Naive thymus-derived CD4-positive, alpha-beta T cell (primary cell): ENCODE measurements at regions of chr3 and their contacts with region 1.

Region 1: DNA sequence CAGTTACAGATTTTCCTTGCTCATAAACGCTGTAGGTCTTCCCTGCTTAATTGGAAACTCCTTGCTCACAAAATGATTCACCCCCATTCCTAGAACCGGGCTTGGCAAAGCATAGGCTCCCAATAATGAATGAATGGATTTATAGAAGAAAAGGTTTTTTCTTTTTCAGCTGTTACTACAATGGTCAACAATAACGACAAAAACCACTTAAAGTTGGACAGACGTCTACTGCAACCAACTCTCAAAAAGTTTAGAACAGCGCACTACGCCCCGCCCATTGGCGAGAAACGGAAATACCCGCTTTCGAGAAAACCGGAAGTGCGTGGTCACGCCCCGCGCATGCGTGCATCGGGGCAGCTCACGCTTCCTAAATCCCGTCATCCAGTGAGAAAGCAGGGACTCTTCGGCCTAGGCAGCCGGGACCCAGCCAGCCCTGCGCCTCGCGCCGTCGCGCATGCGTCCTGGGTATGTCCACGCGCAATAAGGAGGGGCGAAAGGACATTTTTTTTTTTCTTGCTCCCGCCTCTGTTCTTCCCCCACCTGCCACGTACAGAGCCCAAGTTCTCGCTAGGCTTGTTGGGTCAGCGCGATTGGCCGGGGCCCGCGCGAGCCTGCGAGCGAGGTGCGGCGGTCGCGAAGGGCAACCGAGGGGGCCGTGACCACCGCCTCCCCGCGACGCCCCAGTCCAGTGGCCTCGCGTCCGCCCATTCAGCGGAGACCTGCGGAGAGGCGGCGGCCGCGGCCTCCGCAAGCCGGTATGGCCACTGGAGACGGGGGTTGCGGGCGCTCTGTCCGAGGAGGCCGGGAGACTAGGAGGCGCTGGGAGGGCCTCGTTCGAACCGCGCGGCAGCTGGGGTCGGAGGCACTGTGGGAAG is at the start of gene TFG:
- DNase-seq: peak; percentile 94 to 98 (median 96)
- ATAC-seq: peak; percentile 95
- H3K4me3 ChIP-seq: peak within 1 kb of the TSS; percentile 68
- H3K4me3 Mint-ChIP-seq: peak within 1 kb of the TSS; percentile 85 to 98 (median 94)
- H3K27ac ChIP-seq: peak within 1 kb of the TSS; percentile 90
- H3K27ac Mint-ChIP-seq: peak within 1 kb of the TSS; percentile 95 to 99 (median 98)
- H3K4me1 ChIP-seq: peaks cover 19 to 21% of the 10 kb centered on the region in 2 donors
- H3K4me1 Mint-ChIP-seq: peaks cover 32 to 50% (median 47%) of the 10 kb centered on the region in 7 donors
- H3K27me3 ChIP-seq: no peaks in the 10 kb centered on the region
- H3K27me3 Mint-ChIP-seq: peaks cover 0 to 14% (median 6%) of the 10 kb centered on the region in 5 donors
- total RNA-seq, gene TFG: 40.8 to 72.2 (median 45.6) TPM

Region 2: GRCh38 chr3:100260685-100261484 is 448.3 kb before region 1 on chr3 and contains the start of gene TBC1D23:
- CTCF ChIA-PET with region 1: no interaction called
- POLR2A ChIA-PET with region 1: interaction called, 3 read pairs
- intact Hi-C with region 1: loop called (anchors 1 kb)
- DNase-seq: peak; percentile 89 to 98 (median 96)
- ATAC-seq: peak; percentile 99
- H3K4me3 ChIP-seq: peak within 1 kb of the TSS; percentile 92
- H3K4me3 Mint-ChIP-seq: peak within 1 kb of the TSS; percentile 90 to 100 (median 94)
- H3K27ac ChIP-seq: peak within 1 kb of the TSS; percentile 89
- H3K27ac Mint-ChIP-seq: peak within 1 kb of the TSS; percentile 97 to 100 (median 99)
- H3K4me1 ChIP-seq: peaks cover 10 to 20% of the 10 kb centered on the region in 2 donors
- H3K4me1 Mint-ChIP-seq: peaks cover 37 to 75% (median 65%) of the 10 kb centered on the region in 7 donors
- H3K27me3 ChIP-seq: no peaks in the 10 kb centered on the region
- H3K27me3 Mint-ChIP-seq: no peaks in the 10 kb centered on the region
- total RNA-seq, gene TBC1D23: 30.8 to 42.4 (median 33.9) TPM

Region 3: DNA sequence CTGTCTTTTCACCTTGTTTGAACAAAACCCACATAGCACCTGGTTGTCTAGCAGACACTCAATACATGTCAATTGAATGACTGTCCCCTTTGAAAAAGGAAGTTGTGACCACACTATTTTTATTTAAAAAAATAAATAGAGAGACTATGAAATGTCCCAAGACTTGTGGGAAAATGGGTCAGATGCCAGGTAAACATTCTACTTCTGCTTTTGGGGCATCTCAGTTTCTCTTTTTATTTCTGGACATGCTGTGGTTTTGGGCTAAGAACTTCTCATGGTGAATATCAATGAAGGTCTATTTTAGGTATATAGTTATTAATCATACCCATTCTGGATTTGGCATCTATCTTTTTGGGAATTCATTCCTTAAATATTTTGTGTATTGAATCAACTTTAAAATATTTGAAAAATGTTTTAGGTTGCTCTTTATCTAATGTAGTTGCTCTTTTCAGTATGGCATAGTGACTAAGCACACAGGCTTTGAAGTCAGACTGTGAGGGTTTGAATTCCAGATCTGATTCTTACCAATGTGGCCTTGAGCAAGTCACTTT is 212.4 kb before region 1 on chr3:
- CTCF ChIA-PET with region 1: no interaction called
- POLR2A ChIA-PET with region 1: no interaction called
- intact Hi-C with region 1: no loop called
- DNase-seq: no peak
- ATAC-seq: no peak
- H3K4me3 ChIP-seq: no peak overlapping the region
- H3K4me3 Mint-ChIP-seq: no peak overlapping the region
- H3K27ac ChIP-seq: no peak overlapping the region
- H3K27ac Mint-ChIP-seq: no peak overlapping the region
- H3K4me1 ChIP-seq: peaks cover 6% of the 10 kb centered on the region in 2 donors
- H3K4me1 Mint-ChIP-seq: peaks cover 5 to 11% (median 9%) of the 10 kb centered on the region in 7 donors
- H3K27me3 ChIP-seq: no peaks in the 10 kb centered on the region
- H3K27me3 Mint-ChIP-seq: peaks cover 9 to 46% (median 24%) of the 10 kb centered on the region in 5 donors

Region 4: DNA sequence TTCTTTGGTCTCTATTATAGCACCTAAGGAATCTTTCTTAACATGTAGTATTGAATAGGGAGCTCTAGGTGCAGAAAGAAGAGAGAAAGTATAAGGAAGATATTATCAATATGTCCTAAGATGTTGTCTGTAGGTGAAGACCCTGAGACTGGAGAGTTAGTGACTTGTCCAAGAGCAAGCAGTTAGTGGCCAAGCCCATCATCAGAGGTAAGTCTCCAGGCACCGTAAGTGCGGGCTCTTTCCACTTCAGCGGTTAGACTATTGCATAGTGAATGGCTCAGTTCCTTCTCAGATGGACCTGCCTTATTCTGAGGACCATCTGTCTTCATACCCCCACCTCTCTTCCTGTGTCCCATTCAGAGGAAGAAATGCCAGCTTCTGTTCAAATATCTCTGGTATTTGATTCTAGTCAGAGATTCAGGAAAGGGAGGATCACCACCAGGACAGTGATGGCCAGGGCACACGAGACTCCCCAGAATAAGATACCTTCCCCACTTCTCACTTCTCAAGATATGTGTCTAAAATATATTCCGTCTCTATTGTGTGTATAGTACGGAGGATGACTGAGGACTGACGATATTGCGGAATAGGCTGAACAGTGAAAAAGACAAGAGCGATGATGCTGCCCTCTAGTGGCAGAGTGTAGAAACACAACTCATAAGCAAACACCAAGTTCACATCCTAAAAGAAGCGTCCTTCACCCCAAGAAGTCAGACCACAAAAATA is 118.9 kb before region 1 on chr3:
- CTCF ChIA-PET with region 1: no interaction called
- POLR2A ChIA-PET with region 1: no interaction called
- intact Hi-C with region 1: loop called in 1 of 2 experiments (anchors 1 kb)
- DNase-seq: peak; percentile 24 to 73 (median 61)
- ATAC-seq: peak; percentile 98
- H3K4me3 ChIP-seq: no peak overlapping the region
- H3K4me3 Mint-ChIP-seq: peak overlapping the region in 7 of 10 donors; percentile 13 to 77 (median 60)
- H3K27ac ChIP-seq: no peak overlapping the region
- H3K27ac Mint-ChIP-seq: no peak overlapping the region
- H3K4me1 ChIP-seq: no peaks in the 10 kb centered on the region
- H3K4me1 Mint-ChIP-seq: peaks cover 0 to 8% (median 4%) of the 10 kb centered on the region in 7 donors
- H3K27me3 ChIP-seq: no peaks in the 10 kb centered on the region
- H3K27me3 Mint-ChIP-seq: peaks cover 0 to 12% (median 0%) of the 10 kb centered on the region in 5 donors

Region 5: DNA sequence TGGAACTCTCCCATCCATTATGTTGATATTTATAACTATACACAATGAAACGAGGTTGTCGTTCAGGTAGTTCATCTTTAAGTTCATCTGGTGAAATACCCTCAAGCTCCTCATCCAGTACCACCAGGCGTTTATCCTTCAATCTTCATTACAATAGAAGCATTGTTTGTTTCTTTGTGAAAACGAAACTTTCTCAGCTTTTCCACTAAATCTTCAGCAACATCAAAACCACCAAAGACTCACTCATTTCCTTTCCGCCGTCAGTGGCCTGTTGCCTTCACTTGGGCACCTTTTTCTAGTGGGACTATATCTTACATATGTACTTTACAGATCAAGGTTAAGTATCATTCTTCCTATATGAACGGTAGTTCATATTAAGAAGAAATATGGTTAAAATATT is 44.0 kb before region 1 on chr3:
- CTCF ChIA-PET with region 1: no interaction called
- POLR2A ChIA-PET with region 1: no interaction called
- intact Hi-C with region 1: loop called in 1 of 2 experiments (anchors 1 kb)
- DNase-seq: peak in 7 of 9 donors; percentile 18 to 42 (median 28)
- ATAC-seq: peak; percentile 72
- H3K4me3 ChIP-seq: no peak overlapping the region
- H3K4me3 Mint-ChIP-seq: peak overlapping the region; percentile 46 to 87 (median 76)
- H3K27ac ChIP-seq: peak overlapping the region; percentile 9
- H3K27ac Mint-ChIP-seq: peak overlapping the region; percentile 28 to 88 (median 73)
- H3K4me1 ChIP-seq: peaks cover 0 to 8% of the 10 kb centered on the region in 2 donors
- H3K4me1 Mint-ChIP-seq: peaks cover 7 to 35% (median 17%) of the 10 kb centered on the region in 7 donors
- H3K27me3 ChIP-seq: no peaks in the 10 kb centered on the region
- H3K27me3 Mint-ChIP-seq: peaks cover 0 to 8% (median 0%) of the 10 kb centered on the region in 5 donors

Region 6: GRCh38 chr3:100968932-100969906 is 260.0 kb after region 1 on chr3:
- CTCF ChIA-PET with region 1: no interaction called
- POLR2A ChIA-PET with region 1: no interaction called
- intact Hi-C with region 1: no loop called
- DNase-seq: no peak
- ATAC-seq: no peak
- H3K4me3 ChIP-seq: no peak overlapping the region
- H3K4me3 Mint-ChIP-seq: no peak overlapping the region
- H3K27ac ChIP-seq: no peak overlapping the region
- H3K27ac Mint-ChIP-seq: no peak overlapping the region
- H3K4me1 ChIP-seq: no peaks in the 10 kb centered on the region
- H3K4me1 Mint-ChIP-seq: no peaks in the 10 kb centered on the region
- H3K27me3 ChIP-seq: no peaks in the 10 kb centered on the region
- H3K27me3 Mint-ChIP-seq: peaks cover 4 to 9% (median 5%) of the 10 kb centered on the region in 5 donors

Region 7: GRCh38 chr3:101676765-101677435 is 967.7 kb after region 1 on chr3 and contains the start of gene ZBTB11:
- CTCF ChIA-PET with region 1: no interaction called
- POLR2A ChIA-PET with region 1: interaction called, 3 read pairs
- intact Hi-C with region 1: loop called (anchors 1 to 2 kb)
- DNase-seq: peak; percentile 98 to 100 (median 99)
- ATAC-seq: peak; percentile 80
- H3K4me3 ChIP-seq: peak within 1 kb of the TSS; percentile 91
- H3K4me3 Mint-ChIP-seq: peak within 1 kb of the TSS; percentile 87 to 97 (median 93)
- H3K27ac ChIP-seq: peak within 1 kb of the TSS; percentile 98
- H3K27ac Mint-ChIP-seq: peak within 1 kb of the TSS; percentile 93 to 100 (median 97)
- H3K4me1 ChIP-seq: peaks cover 23 to 26% of the 10 kb centered on the region in 2 donors
- H3K4me1 Mint-ChIP-seq: peaks cover 19 to 63% (median 54%) of the 10 kb centered on the region in 7 donors
- H3K27me3 ChIP-seq: no peaks in the 10 kb centered on the region
- H3K27me3 Mint-ChIP-seq: no peaks in the 10 kb centered on the region
- total RNA-seq, gene ZBTB11: 31.9 to 68.2 (median 54.2) TPM